Brain microvascular endothelial cell (primary cell): ENCODE measurements at regions of chr9 and their contacts with region 1.

Region 1: DNA sequence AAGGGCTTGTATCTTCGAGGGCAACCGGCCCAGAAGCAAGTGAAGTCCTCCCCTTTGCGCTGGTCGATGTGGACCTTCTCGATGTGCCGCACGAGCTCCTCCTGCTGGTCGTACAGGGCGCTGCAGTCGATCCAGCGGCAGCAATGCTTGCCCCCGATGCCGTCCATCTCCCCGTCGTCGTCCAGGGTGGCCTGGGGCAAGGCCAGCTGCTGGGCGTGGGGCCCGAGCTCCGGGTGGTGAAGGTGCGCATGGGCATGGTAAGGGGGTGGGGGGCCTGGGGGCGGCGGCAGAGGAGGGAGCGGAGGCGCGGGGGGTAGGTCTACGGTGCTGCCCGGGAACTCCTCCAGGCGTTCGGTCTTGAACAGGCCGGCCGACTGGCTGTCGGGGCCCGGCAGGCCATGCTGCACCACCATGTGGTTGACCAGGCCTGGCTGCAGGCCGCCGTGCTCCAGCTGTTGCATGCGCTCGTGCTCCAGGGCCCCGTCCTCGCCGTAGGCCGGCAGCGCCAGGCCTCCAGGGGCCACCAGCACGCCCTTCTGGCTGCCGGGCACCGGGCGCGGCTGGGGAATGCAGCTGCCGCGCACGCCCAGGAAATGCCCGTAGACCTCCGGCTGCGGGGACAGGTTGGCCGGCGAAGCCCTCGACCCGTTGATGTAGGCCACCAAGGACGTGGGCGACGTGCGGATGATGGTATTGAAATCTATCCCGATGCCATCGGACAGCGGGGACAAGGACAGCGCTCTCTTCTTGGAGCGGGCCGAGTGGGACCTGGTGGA is 181.8 kb downstream of the GLIS3 start:
- DNase-seq: no peak
- H3K4me3 ChIP-seq: no peak overlapping the region
- H3K27ac ChIP-seq: no peak overlapping the region
- H3K27me3 ChIP-seq: no peaks in the 10 kb centered on the region
- CTCF ChIP-seq: peak; percentile 60

Region 2: GRCh38 chr9:4027606-4028005 is 90.4 kb before region 1 on chr9:
- in situ Hi-C with region 1: no loop called
- DNase-seq: no peak
- H3K4me3 ChIP-seq: no peak overlapping the region
- H3K27ac ChIP-seq: no peak overlapping the region
- H3K27me3 ChIP-seq: no peaks in the 10 kb centered on the region
- CTCF ChIP-seq: no peak

Region 3: GRCh38 chr9:4339357-4339756 is 221.3 kb after region 1 on chr9:
- in situ Hi-C with region 1: loop called (anchors 25 kb)
- DNase-seq: peak; percentile 91
- H3K4me3 ChIP-seq: no peak overlapping the region
- H3K27ac ChIP-seq: no peak overlapping the region
- H3K27me3 ChIP-seq: no peaks in the 10 kb centered on the region
- CTCF ChIP-seq: peak; percentile 99